OCI-LY7 (cell line): ENCODE measurements at regions of chr3 and their contacts with region 1.

Region 1: GRCh38 chr3:113287803-113288648 is 76.7 kb downstream of the BOC start:
- DNase-seq: peak; percentile 64
- H3K4me3 ChIP-seq: no peak overlapping the region
- H3K27ac ChIP-seq: no peak overlapping the region
- H3K4me1 ChIP-seq: no peaks in the 10 kb centered on the region
- CTCF ChIP-seq: peak; percentile 98

Region 2: GRCh38 chr3:112642912-112643506 is 645.0 kb before region 1 on chr3:
- CTCF ChIA-PET with region 1: no interaction called
- POLR2A ChIA-PET with region 1: no interaction called
- intact Hi-C with region 1: loop called (anchors 2 kb)
- DNase-seq: peak; percentile 83
- H3K4me3 ChIP-seq: peak overlapping the region; percentile 33
- H3K27ac ChIP-seq: no peak overlapping the region
- H3K4me1 ChIP-seq: peaks cover 6% of the 10 kb centered on the region
- CTCF ChIP-seq: peak; percentile 94

Region 3: GRCh38 chr3:112734718-112735350 is 553.2 kb before region 1 on chr3:
- CTCF ChIA-PET with region 1: no interaction called
- POLR2A ChIA-PET with region 1: no interaction called
- intact Hi-C with region 1: loop called (anchors 5 kb)
- DNase-seq: peak; percentile 73
- H3K4me3 ChIP-seq: no peak overlapping the region
- H3K27ac ChIP-seq: no peak overlapping the region
- H3K4me1 ChIP-seq: no peaks in the 10 kb centered on the region
- CTCF ChIP-seq: peak; percentile 92

Region 4: DNA sequence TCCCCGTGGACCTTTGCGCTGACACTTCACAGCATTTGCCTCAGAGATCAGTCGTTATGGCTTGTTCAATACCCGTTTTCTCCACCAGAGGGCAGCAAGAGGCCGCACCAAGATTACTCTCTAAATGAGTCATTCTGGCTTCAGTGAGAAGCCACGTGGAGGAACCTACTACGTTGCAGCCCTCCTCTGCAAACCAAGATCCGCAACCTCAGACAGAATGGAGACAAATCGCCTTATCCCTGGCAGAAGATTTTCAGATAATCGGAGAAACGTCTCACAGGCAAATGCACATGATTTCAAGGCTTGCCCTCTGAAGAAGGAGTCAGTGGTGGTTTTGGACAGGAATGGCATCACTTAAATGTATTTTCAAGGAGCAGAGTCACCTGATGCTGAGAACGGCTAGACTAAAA is 236.7 kb before region 1 on chr3:
- CTCF ChIA-PET with region 1: no interaction called
- POLR2A ChIA-PET with region 1: interaction called, 4 read pairs
- intact Hi-C with region 1: loop called (anchors 1 kb)
- DNase-seq: peak; percentile 63
- H3K4me3 ChIP-seq: no peak overlapping the region
- H3K27ac ChIP-seq: no peak overlapping the region
- H3K4me1 ChIP-seq: no peaks in the 10 kb centered on the region
- CTCF ChIP-seq: peak; percentile 94

Region 5: DNA sequence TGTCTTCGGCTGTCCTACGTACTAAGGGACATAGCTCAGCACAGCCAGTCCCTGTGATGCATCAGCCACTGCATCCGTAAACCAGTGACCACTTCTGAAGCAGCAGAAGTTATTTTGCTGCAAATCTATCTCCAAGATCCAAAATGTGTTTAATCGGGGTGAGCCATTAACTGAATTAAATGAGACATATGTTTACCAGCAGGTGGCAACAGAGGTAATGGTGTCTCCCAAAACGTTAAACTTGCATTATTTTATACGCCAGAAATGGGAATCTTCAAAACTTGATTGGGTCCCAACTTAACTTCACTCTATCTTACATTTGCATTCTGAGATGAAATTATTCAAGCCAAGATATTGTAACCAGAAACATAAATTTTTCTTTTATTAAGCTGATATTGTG is 152.0 kb before region 1 on chr3:
- CTCF ChIA-PET with region 1: no interaction called
- POLR2A ChIA-PET with region 1: no interaction called
- intact Hi-C with region 1: loop called (anchors 5 kb)
- DNase-seq: peak; percentile 36
- H3K4me3 ChIP-seq: no peak overlapping the region
- H3K27ac ChIP-seq: no peak overlapping the region
- H3K4me1 ChIP-seq: no peaks in the 10 kb centered on the region
- CTCF ChIP-seq: peak; percentile 77

Region 6: GRCh38 chr3:113310960-113311359 is 22.9 kb after region 1 on chr3:
- CTCF ChIA-PET with region 1: no interaction called
- POLR2A ChIA-PET with region 1: no interaction called
- intact Hi-C with region 1: no loop called
- DNase-seq: no peak
- H3K4me3 ChIP-seq: no peak overlapping the region
- H3K27ac ChIP-seq: no peak overlapping the region
- H3K4me1 ChIP-seq: no peaks in the 10 kb centered on the region
- CTCF ChIP-seq: no peak